ENCODE measurements at regions of chr1 and their contacts with region 1.

Region 1: DNA sequence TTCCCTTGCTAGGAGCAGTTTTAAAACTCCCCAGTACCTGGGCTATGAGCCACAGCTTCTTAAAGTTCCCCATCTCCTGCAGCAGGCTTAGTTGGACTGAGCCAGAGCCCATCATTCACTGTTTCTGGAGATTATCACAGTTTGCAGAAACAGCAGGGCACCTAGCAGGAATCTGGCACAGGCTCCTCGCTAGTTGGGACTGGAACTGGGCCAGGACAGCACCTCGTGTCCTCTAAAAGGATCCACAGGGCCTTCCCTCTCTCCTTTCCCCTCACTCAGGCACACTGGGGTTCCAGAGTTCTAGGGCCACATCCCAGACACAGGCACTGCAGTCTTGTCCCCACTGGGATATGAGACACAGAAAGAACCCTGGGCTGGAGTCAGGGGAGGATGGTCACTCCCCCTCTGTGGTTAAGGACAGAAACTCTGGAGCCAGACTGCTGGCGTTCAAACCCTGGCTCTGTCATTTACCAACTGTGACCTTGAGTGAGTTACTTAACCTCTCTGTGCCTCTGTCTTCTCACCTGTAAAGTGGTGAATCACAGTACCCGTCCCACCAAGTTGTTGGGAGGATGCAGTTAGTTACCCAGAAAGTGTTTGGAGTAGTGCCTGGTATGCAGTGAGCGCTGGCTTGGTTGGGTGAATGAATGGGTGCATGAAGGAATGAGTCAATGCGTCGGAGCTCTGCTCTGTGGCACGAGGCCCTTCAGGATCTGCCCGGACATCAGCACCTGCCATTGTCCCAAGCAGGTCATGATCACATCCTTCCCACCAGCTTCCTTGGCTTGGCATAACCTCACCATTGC is 18.8 kb upstream of the ECE1 start:
- DNase-seq: no peak
- H3K4me3 ChIP-seq: no peak overlapping the region
- H3K27ac ChIP-seq: peak overlapping the region; percentile 60 to 82
- H3K4me1 ChIP-seq: peaks cover 8 to 38% of the 10 kb centered on the region in 2 donors
- H3K27me3 ChIP-seq: no peaks in the 10 kb centered on the region
- CTCF ChIP-seq: no peak
- POLR2A ChIP-seq: no peak

Region 2: DNA sequence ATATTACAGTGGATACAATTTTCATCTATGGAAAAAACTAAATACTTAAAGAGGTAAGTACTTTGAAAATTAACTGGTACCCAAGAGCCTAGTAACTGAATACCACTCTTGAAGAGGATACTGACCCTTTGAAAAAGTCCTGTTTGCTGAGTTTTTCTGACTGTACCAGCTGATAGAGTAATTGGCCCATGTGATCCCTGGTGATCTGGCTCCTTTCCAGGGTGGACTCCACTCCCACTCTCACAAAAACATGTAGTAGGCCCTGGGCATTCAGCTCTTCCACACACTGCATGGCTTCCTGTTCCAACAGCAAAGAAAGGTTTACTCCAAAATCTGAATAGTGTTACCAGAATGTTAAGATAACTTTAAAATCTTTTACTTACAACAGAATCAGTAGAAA is 468.3 kb before region 1 on chr1:
- intact Hi-C with region 1: no loop called
- DNase-seq: no peak
- H3K4me3 ChIP-seq: no peak overlapping the region
- H3K27ac ChIP-seq: no peak overlapping the region
- H3K4me1 ChIP-seq: no peaks in the 10 kb centered on the region
- H3K27me3 ChIP-seq: no peaks in the 10 kb centered on the region
- CTCF ChIP-seq: no peak
- POLR2A ChIP-seq: no peak

Region 3: DNA sequence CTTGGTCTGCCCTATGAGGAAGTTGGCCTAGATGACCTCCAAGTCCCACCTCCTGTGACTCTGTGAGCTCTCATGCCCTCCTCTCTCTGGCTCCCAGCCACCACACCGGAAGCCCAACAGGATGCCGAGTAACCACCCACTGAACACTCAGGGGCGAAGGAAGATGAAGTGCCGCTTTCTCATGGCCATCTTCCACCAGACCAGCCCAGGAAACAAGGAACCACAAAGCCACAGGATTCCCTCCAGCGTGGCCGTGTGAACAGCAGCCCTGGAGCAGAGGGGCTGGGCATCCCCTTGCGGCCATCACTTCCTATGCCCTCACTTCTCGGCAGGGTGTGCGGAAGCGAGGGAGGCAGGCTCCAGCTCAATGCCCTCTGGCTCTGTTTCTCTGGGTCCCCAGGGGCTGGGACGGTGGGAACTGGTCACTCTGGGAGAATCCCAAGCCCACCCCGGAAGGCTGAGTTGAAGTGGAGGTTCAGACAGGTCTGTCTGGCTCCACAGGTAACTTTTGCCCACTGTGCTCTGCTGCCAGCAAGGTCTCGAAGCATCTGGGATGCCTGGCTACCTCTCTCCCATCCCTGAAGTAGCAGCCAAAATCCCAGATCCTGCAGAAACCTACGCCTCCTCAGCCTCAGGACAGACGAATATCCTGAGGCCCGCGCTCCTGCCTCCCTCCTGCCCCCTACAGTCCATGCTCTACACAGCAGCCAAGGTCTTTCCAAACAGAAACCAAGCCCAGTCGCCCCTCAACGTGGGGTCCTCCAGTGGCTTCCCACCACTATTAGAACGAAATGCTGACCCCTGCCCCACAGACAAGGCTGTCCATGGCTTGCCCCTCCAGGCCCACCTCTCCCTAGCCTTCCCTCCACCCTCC is 25.4 kb after region 1 on chr1:
- intact Hi-C with region 1: loop called (anchors 1 kb)
- DNase-seq: peak in 1 of 2 donors; percentile 79
- H3K4me3 ChIP-seq: peak overlapping the region; percentile 24 to 67 (median 45)
- H3K27ac ChIP-seq: peak overlapping the region; percentile 94 to 98
- H3K4me1 ChIP-seq: peaks cover 30 to 50% of the 10 kb centered on the region in 2 donors
- H3K27me3 ChIP-seq: no peaks in the 10 kb centered on the region
- CTCF ChIP-seq: peak; percentile 77 to 90 (median 87)
- POLR2A ChIP-seq: no peak

Measured in breast epithelium (tissue), 4 donors.